B cell (primary cell): ENCODE measurements at regions of chrX and their contacts with region 1.

Region 1: GRCh38 chrX:24838629-24839028 is 144.9 kb downstream of the POLA1 start:
- DNase-seq: peak; percentile 20
- ATAC-seq: no peak
- H3K4me3 ChIP-seq: no peak overlapping the region
- H3K4me3 Mint-ChIP-seq: no peak overlapping the region
- H3K27ac ChIP-seq: no peak overlapping the region
- H3K27ac Mint-ChIP-seq: no peak overlapping the region
- H3K4me1 ChIP-seq: peaks cover 0 to 3% of the 10 kb centered on the region in 2 donors
- H3K4me1 Mint-ChIP-seq: peaks cover 4% of the 10 kb centered on the region
- H3K27me3 ChIP-seq: no peaks in the 10 kb centered on the region
- H3K27me3 Mint-ChIP-seq: no peaks in the 10 kb centered on the region
- CTCF ChIP-seq: peak; percentile 68

Region 2: DNA sequence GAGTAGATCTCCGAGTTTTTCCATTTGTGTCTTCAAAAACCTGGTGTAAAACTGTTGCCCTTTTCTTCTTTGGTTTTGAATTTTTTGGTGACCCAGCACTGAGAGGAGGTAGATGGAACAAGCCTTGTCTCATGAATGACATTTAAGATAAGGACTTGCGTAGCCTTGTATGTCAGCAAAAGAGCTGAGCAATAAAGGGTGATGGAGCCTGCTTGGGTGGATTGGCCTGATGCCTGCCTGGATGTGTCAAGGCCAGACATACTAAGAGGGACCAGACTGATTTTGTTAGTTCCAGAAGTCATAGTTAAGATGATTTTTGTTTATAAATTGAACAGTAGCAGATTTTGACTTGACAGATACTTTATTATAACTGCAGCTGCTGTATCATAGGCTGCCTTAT is 10.0 kb before region 1 on chrX:
- CTCF ChIA-PET with region 1: interaction called, 10 read pairs
- POLR2A ChIA-PET with region 1: no interaction called
- intact Hi-C with region 1: no loop called
- DNase-seq: no peak
- ATAC-seq: no peak
- H3K4me3 ChIP-seq: no peak overlapping the region
- H3K4me3 Mint-ChIP-seq: no peak overlapping the region
- H3K27ac ChIP-seq: no peak overlapping the region
- H3K27ac Mint-ChIP-seq: no peak overlapping the region
- H3K4me1 ChIP-seq: no peaks in the 10 kb centered on the region
- H3K4me1 Mint-ChIP-seq: no peaks in the 10 kb centered on the region
- H3K27me3 ChIP-seq: no peaks in the 10 kb centered on the region
- H3K27me3 Mint-ChIP-seq: no peaks in the 10 kb centered on the region
- CTCF ChIP-seq: no peak

Region 3: GRCh38 chrX:25144043-25144940 is 305.7 kb after region 1 on chrX:
- CTCF ChIA-PET with region 1: interaction called, 20 read pairs
- POLR2A ChIA-PET with region 1: no interaction called
- intact Hi-C with region 1: no loop called
- DNase-seq: peak; percentile 29
- ATAC-seq: no peak
- H3K4me3 ChIP-seq: no peak overlapping the region
- H3K4me3 Mint-ChIP-seq: no peak overlapping the region
- H3K27ac ChIP-seq: no peak overlapping the region
- H3K27ac Mint-ChIP-seq: no peak overlapping the region
- H3K4me1 ChIP-seq: no peaks in the 10 kb centered on the region
- H3K4me1 Mint-ChIP-seq: peaks cover 2% of the 10 kb centered on the region
- H3K27me3 ChIP-seq: no peaks in the 10 kb centered on the region
- H3K27me3 Mint-ChIP-seq: peaks cover 5% of the 10 kb centered on the region
- CTCF ChIP-seq: peak; percentile 68